ENCODE measurements at regions of chr3 and their contacts with region 1.

Region 1: DNA sequence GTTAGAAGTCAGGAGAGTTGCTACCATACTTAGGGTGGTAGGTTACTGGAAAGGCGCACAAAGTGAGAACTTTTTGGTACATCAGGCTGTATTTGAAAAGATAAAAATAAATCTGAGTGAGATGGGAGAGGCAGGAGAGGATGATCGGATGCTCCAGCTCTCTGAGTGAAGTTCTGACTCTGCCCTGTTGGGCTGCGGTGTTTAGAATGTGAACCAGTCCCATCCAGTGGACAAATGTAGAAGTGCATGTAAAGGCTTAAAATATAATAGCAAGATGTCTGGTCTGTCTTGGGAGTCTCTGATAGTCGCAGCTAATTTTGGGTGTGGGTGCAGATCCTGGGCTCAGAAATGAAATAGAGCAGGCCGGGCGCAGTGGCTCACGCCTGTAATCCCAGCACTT is 30.4 kb downstream of the ACKR2 start:
- DNase-seq: peak in 1 of 3 donors; percentile 58
- ATAC-seq: peak; percentile 77 to 81
- H3K4me3 ChIP-seq: no peak overlapping the region
- H3K27ac ChIP-seq: no peak overlapping the region
- H3K4me1 ChIP-seq: peaks cover 5% of the 10 kb centered on the region
- H3K27me3 ChIP-seq: no peaks in the 10 kb centered on the region

Region 2: DNA sequence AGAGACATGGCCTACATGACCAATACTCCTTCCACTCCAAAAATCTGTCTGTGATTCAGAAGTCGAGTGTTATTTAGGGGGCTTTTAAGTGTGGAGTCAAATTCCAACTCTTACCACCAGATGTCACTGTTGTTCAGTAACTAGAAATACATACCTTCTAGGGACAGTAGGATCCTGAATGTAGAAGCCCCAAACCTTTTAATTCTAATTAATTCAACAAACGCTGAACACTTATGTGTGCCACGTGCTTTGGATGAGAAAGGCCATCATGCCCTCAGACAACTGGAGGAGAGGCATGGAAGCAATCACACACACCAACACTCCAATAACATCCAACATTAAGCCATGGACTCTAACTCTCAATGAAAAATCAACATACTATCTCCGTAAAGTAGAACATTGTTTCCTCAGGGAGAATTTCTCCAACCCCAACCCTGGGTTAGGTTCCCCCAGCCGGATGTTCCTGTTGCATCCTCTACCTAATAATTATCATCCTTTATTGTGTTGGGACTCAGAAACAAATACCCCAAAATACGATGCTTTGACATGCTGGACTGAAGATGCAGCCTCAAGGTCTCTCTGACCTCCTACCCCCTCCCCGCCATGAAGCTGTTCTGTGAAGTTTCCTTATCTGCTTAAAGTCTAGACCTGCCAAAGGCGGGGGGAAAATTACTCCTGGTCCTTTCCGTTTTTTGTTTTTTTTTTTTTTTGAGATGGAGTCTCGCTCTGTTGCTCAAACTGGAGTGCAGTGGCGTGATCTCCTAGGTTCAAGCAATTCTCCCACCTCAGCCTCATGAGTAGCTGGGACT is 58.5 kb before region 1 on chr3:
- intact Hi-C with region 1: loop called in 2 of 4 experiments (anchors 10 kb)
- DNase-seq: no peak
- ATAC-seq: peak; percentile 67 to 70
- H3K4me3 ChIP-seq: no peak overlapping the region
- H3K27ac ChIP-seq: no peak overlapping the region
- H3K4me1 ChIP-seq: no peaks in the 10 kb centered on the region
- H3K27me3 ChIP-seq: no peaks in the 10 kb centered on the region

Measured in right cardiac atrium (tissue), 5 donors.